Heart left ventricle (tissue), 16 donors: ENCODE measurements at regions of chr10 and their contacts with region 1.

Region 1: GRCh38 chr10:124741281-124741921 is 2.8 kb downstream of the FAM53B start:
- DNase-seq: peak; percentile 85 to 90 (median 87)
- ATAC-seq: peak; percentile 57 to 77 (median 68)
- H3K4me3 ChIP-seq: peak overlapping the region in 9 of 12 donors; percentile 64 to 89 (median 78)
- H3K27ac ChIP-seq: peak overlapping the region; percentile 58 to 95 (median 84)
- H3K4me1 ChIP-seq: peaks cover 36 to 80% (median 69%) of the 10 kb centered on the region in 12 donors
- H3K27me3 ChIP-seq: no peaks in the 10 kb centered on the region
- CTCF ChIP-seq: peak; percentile 73 to 95 (median 92)
- POLR2A ChIP-seq: peak in 1 of 2 donors; percentile 12

Region 2: DNA sequence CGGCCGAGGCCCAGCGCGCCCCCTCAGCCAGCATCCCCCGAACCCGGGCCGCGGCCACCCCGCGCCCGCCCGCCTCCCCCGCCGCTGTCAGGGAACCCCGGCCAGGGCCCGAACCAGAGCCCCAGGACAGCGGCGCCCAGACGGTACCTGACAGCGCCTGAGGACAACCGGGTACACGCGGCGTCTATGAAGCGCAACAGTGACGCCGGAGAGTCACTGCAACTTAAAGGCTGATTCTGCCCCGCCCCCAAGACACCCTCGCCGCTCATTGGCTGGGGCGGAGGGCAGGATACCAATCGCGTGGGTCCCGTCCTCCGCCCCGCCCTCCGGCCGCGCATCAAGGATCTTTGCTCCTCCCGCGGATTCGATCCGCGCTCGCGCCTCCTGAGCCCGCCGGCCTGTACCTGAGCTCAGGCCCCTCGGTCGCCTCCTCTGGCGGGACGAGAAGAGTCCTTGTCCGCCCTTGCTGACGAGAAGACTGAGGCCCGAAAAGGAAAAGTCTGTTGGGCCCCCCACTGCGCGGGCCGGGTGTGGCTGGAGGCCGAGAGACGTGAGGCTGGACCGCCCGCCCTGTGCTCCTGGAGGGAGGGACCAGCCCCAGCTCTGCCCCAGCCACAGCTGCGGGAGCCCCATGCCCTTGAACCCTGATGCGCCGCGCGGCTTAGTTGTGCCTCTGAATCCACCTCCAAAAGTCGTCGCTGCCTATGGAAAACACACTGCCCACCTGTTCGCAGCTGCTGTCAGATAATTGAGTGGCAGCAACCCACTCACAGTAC is 322.5 kb before region 1 on chr10 and contains the start of gene OAT:
- intact Hi-C with region 1: loop called in 1 of 10 experiments (anchors 5 kb)
- DNase-seq: peak; percentile 96 to 98 (median 97)
- ATAC-seq: peak; percentile 96 to 99 (median 98)
- H3K4me3 ChIP-seq: peak within 1 kb of the TSS; percentile 70 to 99 (median 90)
- H3K27ac ChIP-seq: peak within 1 kb of the TSS; percentile 51 to 97 (median 88)
- H3K4me1 ChIP-seq: peaks cover 0 to 42% (median 22%) of the 10 kb centered on the region in 12 donors
- H3K27me3 ChIP-seq: peaks cover 0 to 14% (median 0%) of the 10 kb centered on the region in 9 donors
- CTCF ChIP-seq: no peak
- POLR2A ChIP-seq: peak; percentile 98 to 100
- total RNA-seq, gene OAT: 27.3 to 56.1 (median 33.8) TPM

Region 3: GRCh38 chr10:124539935-124540641 is 201.3 kb before region 1 on chr10:
- intact Hi-C with region 1: loop called in 8 of 10 experiments (anchors 1 to 2 kb)
- DNase-seq: peak; percentile 72 to 83 (median 73)
- ATAC-seq: peak; percentile 52 to 91 (median 85)
- H3K4me3 ChIP-seq: peak overlapping the region in 1 of 12 donors; percentile 12
- H3K27ac ChIP-seq: no peak overlapping the region
- H3K4me1 ChIP-seq: peaks cover 0 to 31% (median 4%) of the 10 kb centered on the region in 12 donors
- H3K27me3 ChIP-seq: no peaks in the 10 kb centered on the region
- CTCF ChIP-seq: peak; percentile 71 to 94 (median 86)
- POLR2A ChIP-seq: no peak

Region 4: GRCh38 chr10:124626759-124627380 is 114.5 kb before region 1 on chr10:
- intact Hi-C with region 1: loop called (anchors 1 to 5 kb)
- DNase-seq: no peak
- ATAC-seq: no peak
- H3K4me3 ChIP-seq: no peak overlapping the region
- H3K27ac ChIP-seq: peak overlapping the region in 5 of 12 donors; percentile 38 to 74 (median 69)
- H3K4me1 ChIP-seq: peaks cover 7 to 99% (median 87%) of the 10 kb centered on the region in 12 donors
- H3K27me3 ChIP-seq: no peaks in the 10 kb centered on the region
- CTCF ChIP-seq: no peak
- POLR2A ChIP-seq: no peak

Region 5: DNA sequence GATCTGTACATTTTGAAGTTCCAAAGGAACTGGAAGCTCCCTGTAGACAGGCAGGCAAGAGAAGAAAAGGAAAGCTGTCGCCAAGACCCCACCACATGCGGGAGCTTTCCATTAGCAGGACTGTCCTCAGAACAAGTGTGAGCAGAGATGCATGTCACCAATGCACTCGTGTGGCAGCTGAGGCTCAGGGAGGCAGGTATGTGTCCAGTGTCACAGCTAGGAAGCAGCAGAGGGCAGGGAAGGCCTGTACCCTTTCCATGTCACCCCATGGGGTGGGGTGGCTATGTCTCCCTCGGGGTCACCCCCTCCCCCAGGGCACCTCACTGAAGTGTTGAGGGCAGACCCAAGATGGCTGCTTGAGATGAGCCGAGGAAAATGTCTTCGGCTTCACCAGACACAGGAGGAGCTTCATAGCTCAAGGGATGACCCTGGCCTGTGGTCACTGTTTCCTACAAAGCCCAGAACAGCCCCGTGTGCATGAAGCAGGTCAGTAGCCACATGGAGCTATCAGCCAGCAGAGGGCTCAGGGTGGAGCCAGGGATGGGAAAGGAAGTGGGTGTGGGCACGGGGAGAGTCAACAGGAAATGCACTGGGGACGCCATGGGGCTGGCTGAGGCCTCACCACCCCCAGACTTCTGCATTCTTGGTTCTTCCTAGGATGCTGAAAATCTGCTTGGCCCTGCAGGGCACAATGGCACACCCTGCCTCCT is 93.8 kb before region 1 on chr10:
- intact Hi-C with region 1: loop called in 5 of 10 experiments (anchors 2 to 5 kb)
- DNase-seq: peak; percentile 75 to 88 (median 84)
- ATAC-seq: peak; percentile 34 to 67 (median 56)
- H3K4me3 ChIP-seq: peak overlapping the region in 1 of 12 donors; percentile 7
- H3K27ac ChIP-seq: peak overlapping the region; percentile 33 to 97 (median 75)
- H3K4me1 ChIP-seq: peaks cover 44 to 100% (median 94%) of the 10 kb centered on the region in 12 donors
- H3K27me3 ChIP-seq: no peaks in the 10 kb centered on the region
- CTCF ChIP-seq: peak in 10 of 12 donors; percentile 11 to 50 (median 28)
- POLR2A ChIP-seq: no peak

Region 6: DNA sequence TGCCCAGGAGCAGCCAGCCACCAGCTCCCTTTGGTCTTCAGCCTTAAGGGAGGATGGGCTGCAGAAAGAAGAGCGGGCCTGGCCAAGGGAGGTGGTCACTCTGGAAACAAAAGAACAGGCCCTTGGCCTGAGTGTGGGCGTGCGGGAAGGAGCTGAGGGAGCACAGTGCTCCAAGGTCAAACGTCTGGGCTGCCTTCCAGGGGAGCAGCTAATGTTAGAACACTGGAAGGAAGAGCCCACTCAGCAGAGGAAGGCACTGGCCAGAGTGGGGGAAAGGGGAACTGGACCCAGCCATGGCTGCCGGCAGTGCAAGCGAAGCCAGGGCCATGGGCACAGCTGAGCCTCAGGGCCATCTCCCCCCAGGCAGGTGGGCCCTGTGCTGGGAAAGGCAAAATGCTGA is 40.0 kb before region 1 on chr10:
- intact Hi-C with region 1: loop called (anchors 2 to 5 kb)
- DNase-seq: peak; percentile 94 to 98 (median 97)
- ATAC-seq: peak; percentile 84 to 90 (median 85)
- H3K4me3 ChIP-seq: no peak overlapping the region
- H3K27ac ChIP-seq: peak overlapping the region; percentile 88 to 97 (median 93)
- H3K4me1 ChIP-seq: peaks cover 49 to 100% (median 99%) of the 10 kb centered on the region in 12 donors
- H3K27me3 ChIP-seq: no peaks in the 10 kb centered on the region
- CTCF ChIP-seq: peak in 1 of 12 donors; percentile 13
- POLR2A ChIP-seq: peak in 1 of 2 donors; percentile 23

Region 7: DNA sequence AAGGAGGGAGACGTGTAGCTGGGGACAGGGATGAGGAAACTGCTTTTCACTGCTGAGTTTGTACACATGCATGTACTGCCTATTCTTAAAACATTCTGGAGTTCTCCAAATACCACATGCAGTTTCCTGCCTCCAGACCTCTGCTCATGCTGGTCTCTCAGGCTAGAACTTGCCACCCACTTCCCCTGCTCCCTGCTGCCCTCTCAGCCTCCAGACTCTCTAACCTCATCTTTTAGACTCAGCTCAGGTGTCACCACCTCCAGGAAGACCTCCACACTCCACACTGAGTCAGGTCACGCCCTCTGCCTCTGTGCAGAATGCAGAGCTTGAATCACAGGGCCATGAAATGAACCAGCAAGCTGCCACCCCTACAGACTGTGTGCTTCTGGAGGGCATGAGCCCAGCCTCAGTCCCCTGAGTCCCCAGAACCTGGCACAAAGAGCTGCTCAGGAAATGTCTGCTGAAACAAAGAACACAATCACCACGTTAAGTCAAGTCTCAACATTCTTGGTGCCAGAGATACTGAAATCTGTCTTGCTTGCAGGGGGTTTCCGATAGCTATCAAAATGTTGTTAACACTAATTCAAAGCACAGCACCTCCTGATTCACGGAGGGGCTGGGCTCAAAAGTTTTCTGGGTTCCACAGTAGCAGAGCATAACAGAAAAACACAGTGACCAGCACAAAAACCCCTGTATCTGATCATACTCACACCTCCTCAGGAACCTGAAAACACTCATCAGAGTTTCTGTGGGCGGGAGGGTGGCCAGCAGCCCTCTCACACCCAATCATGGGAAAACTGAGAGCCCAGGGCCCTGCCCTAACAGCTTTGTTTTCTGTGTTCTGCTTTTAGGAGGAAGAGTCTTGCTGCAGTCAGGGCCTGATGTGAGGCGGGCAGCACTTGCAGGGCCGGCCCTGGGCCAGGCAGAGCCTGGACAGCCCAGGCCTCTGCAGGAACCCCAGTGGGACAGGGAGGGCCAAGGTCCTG is 18.3 kb before region 1 on chr10:
- intact Hi-C with region 1: loop called in 4 of 10 experiments (anchors 2 kb)
- DNase-seq: peak in 3 of 5 donors; percentile 61 to 81 (median 81)
- ATAC-seq: peak; percentile 17 to 58 (median 49)
- H3K4me3 ChIP-seq: peak overlapping the region in 2 of 12 donors; percentile 3 to 11
- H3K27ac ChIP-seq: peak overlapping the region; percentile 68 to 93 (median 82)
- H3K4me1 ChIP-seq: peaks cover 34 to 100% (median 97%) of the 10 kb centered on the region in 12 donors
- H3K27me3 ChIP-seq: no peaks in the 10 kb centered on the region
- CTCF ChIP-seq: no peak
- POLR2A ChIP-seq: peak in 1 of 2 donors; percentile 12

Region 8: GRCh38 chr10:124894569-124895215 is 153.3 kb after region 1 on chr10:
- intact Hi-C with region 1: no loop called
- DNase-seq: no peak
- ATAC-seq: no peak
- H3K4me3 ChIP-seq: no peak overlapping the region
- H3K27ac ChIP-seq: no peak overlapping the region
- H3K4me1 ChIP-seq: peaks cover 0 to 4% (median 0%) of the 10 kb centered on the region in 12 donors
- H3K27me3 ChIP-seq: peaks cover 0 to 6% (median 0%) of the 10 kb centered on the region in 9 donors
- CTCF ChIP-seq: no peak
- POLR2A ChIP-seq: no peak

Region 9: GRCh38 chr10:124949543-124949942 is 208.1 kb after region 1 on chr10:
- intact Hi-C with region 1: no loop called
- DNase-seq: no peak
- ATAC-seq: no peak
- H3K4me3 ChIP-seq: no peak overlapping the region
- H3K27ac ChIP-seq: no peak overlapping the region
- H3K4me1 ChIP-seq: peaks cover 0 to 62% (median 22%) of the 10 kb centered on the region in 12 donors
- H3K27me3 ChIP-seq: no peaks in the 10 kb centered on the region
- CTCF ChIP-seq: no peak
- POLR2A ChIP-seq: no peak